GM12878 (cell line): ENCODE measurements at regions of chr12 and their contacts with region 1.

Region 1: GRCh38 chr12:116737774-116738700 is at the starts of genes RNFT2 and SPRING1:
- DNase-seq: peak; percentile 95
- ATAC-seq: peak; percentile 97
- H3K4me3 ChIP-seq: peak within 1 kb of the TSS; percentile 99
- H3K27ac ChIP-seq: peak within 1 kb of the TSS; percentile 56
- H3K4me1 ChIP-seq: peaks cover 4% of the 10 kb centered on the region; the same call in 1 of the 2 replicates
- H3K27me3 ChIP-seq: no peaks in the 10 kb centered on the region
- CTCF ChIP-seq: peak in 1 of 3 experiments; percentile 20; a peak in 1 of 6 replicates
- EP300 ChIP-seq: no peak
- POLR2A ChIP-seq: peak; percentile 86
- RAD21 ChIP-seq: no peak
- polyA plus RNA-seq, gene RNFT2: 3.5 to 12.7 TPM
- polyA plus RNA-seq, gene SPRING1: 2.5 to 4.4 TPM

Region 2: GRCh38 chr12:116707751-116708150 is 30.3 kb before region 1 on chr12:
- CTCF ChIA-PET with region 1: no interaction called
- POLR2A ChIA-PET with region 1: no interaction called
- RAD21 ChIA-PET with region 1: no interaction called
- SMC1A ChIA-PET with region 1: no interaction called
- in situ Hi-C with region 1: no loop called
- intact Hi-C with region 1: no loop called
- DNase-seq: no peak
- ATAC-seq: no peak
- H3K4me3 ChIP-seq: no peak overlapping the region
- H3K27ac ChIP-seq: no peak overlapping the region
- H3K4me1 ChIP-seq: no peaks in the 10 kb centered on the region
- H3K27me3 ChIP-seq: no peaks in the 10 kb centered on the region; a peak in 1 of 4 replicates
- CTCF ChIP-seq: no peak
- EP300 ChIP-seq: no peak
- POLR2A ChIP-seq: no peak
- RAD21 ChIP-seq: no peak

Region 3: DNA sequence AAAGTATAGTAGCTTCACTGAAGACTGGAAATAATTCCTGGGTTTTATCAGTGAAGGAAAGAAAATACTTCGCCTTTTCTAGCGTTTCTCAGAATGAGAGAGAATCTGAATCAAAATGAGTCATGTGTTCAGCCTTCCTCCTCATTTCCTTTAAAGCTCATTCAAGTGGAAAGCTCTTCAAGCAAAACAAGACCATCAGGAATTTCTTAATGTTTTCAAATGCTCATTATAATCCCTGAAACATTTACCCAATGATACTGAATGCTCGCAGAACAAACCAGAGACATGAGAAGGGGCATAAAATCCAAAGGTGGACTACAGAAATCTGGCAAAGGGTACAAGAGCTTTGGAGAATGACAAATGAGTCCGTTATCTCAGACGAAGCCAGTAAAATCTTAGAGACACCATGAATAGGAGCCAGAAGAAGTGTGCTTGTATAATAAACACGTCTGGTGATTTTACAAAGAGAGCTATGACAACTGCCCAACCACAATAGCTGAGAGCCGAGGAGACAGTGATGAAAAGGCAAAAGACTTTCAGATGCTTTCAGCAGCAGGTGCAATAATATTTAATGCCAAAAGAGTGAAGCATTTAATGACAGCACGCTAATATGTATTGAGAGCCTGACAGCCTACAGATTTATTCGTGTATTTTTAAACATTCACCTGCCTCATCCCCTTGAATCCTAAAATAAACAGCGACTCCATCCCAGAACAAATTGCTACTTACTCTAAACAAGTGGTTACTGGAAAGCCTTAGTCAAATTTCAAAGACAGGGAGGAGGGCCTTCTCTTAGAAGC is 19.2 kb before region 1 on chr12:
- CTCF ChIA-PET with region 1: no interaction called
- POLR2A ChIA-PET with region 1: no interaction called
- RAD21 ChIA-PET with region 1: no interaction called
- SMC1A ChIA-PET with region 1: no interaction called
- in situ Hi-C with region 1: no loop called
- intact Hi-C with region 1: no loop called
- DNase-seq: no peak
- ATAC-seq: no peak
- H3K4me3 ChIP-seq: no peak overlapping the region
- H3K27ac ChIP-seq: no peak overlapping the region
- H3K4me1 ChIP-seq: no peaks in the 10 kb centered on the region
- H3K27me3 ChIP-seq: no peaks in the 10 kb centered on the region
- CTCF ChIP-seq: no peak
- EP300 ChIP-seq: no peak
- POLR2A ChIP-seq: no peak
- RAD21 ChIP-seq: no peak

Region 4: GRCh38 chr12:116818948-116819832 is 81.2 kb after region 1 on chr12:
- CTCF ChIA-PET with region 1: no interaction called
- POLR2A ChIA-PET with region 1: no interaction called
- RAD21 ChIA-PET with region 1: no interaction called
- SMC1A ChIA-PET with region 1: no interaction called
- in situ Hi-C with region 1: no loop called
- intact Hi-C with region 1: no loop called
- DNase-seq: peak; percentile 17
- ATAC-seq: peak; percentile 93
- H3K4me3 ChIP-seq: peak overlapping the region; percentile 93
- H3K27ac ChIP-seq: peak overlapping the region; percentile 69
- H3K4me1 ChIP-seq: peaks cover 6% of the 10 kb centered on the region; the same call in 1 of the 2 replicates
- H3K27me3 ChIP-seq: no peaks in the 10 kb centered on the region
- CTCF ChIP-seq: no peak
- EP300 ChIP-seq: no peak
- POLR2A ChIP-seq: peak; percentile 83
- RAD21 ChIP-seq: no peak

Region 5: GRCh38 chr12:116880817-116881324 is 142.8 kb after region 1 on chr12:
- CTCF ChIA-PET with region 1: no interaction called
- POLR2A ChIA-PET with region 1: no interaction called
- RAD21 ChIA-PET with region 1: no interaction called
- SMC1A ChIA-PET with region 1: no interaction called
- in situ Hi-C with region 1: no loop called
- intact Hi-C with region 1: loop called (anchors 10 kb)
- DNase-seq: no peak
- ATAC-seq: peak; percentile 93
- H3K4me3 ChIP-seq: no peak overlapping the region
- H3K27ac ChIP-seq: no peak overlapping the region
- H3K4me1 ChIP-seq: no peaks in the 10 kb centered on the region; the same call in 1 of the 2 replicates
- H3K27me3 ChIP-seq: peaks cover 22 to 25% of the 10 kb centered on the region in 2 experiments
- CTCF ChIP-seq: 0 out of 6 replicates have a peak, but pooled peaks of 2 of the 3 experiments have one; percentile 4 to 9
- EP300 ChIP-seq: no peak
- POLR2A ChIP-seq: no peak
- RAD21 ChIP-seq: no peak

Region 6: DNA sequence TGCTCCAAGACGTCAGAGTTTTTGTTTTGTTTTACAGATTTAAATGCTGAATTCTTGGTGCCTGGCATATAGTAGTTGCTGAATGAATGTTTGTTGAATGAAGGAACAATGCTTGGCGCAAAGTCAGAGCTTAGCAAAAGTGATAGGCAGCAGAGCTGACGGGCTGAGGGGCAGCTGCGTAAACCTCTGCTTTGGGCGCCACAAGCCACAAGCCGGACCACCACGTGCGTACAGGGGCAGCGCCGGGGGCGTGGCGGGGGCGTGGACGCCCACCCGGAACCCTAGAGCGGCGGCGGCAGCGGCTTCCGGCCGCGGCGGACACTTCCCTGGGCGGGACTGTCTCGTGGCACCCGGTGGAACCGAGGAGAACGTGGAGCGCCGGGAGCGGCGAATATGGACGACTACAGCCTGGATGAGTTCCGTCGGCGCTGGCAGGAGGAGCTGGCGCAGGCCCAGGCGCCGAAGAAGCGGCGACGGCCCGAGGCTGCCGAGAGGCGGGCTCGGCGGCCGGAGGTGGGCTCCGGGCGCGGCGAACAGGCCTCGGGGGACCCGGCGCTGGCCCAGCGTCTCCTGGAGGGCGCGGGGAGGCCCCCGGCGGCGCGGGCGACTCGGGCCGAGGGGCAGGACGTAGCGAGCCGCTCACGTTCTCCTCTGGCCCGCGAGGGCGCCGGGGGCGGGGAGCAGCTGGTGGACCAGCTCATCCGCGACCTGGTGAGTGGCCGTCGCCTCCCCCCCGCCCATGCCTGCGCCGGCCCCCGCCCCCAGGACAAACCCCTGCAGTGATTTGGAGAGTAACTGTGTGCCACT is 172.8 kb after region 1 on chr12 and contains the start of gene FBXW8:
- CTCF ChIA-PET with region 1: no interaction called
- POLR2A ChIA-PET with region 1: no interaction called
- RAD21 ChIA-PET with region 1: no interaction called
- SMC1A ChIA-PET with region 1: no interaction called
- in situ Hi-C with region 1: no loop called
- intact Hi-C with region 1: no loop called
- DNase-seq: no peak
- ATAC-seq: peak; percentile 98
- H3K4me3 ChIP-seq: peak within 1 kb of the TSS; percentile 71
- H3K27ac ChIP-seq: no peak within 1 kb of the TSS; the same call in 1 of the 2 replicates
- H3K4me1 ChIP-seq: no peaks in the 10 kb centered on the region; the same call in 1 of the 2 replicates
- H3K27me3 ChIP-seq: no peaks in the 10 kb centered on the region
- CTCF ChIP-seq: no peak
- EP300 ChIP-seq: no peak
- POLR2A ChIP-seq: peak; percentile 84
- RAD21 ChIP-seq: no peak
- polyA plus RNA-seq, gene FBXW8: 0.49 to 0.52 TPM